HCT116 (cell line): ENCODE measurements at regions of chr11 and their contacts with region 1.

Region 1: DNA sequence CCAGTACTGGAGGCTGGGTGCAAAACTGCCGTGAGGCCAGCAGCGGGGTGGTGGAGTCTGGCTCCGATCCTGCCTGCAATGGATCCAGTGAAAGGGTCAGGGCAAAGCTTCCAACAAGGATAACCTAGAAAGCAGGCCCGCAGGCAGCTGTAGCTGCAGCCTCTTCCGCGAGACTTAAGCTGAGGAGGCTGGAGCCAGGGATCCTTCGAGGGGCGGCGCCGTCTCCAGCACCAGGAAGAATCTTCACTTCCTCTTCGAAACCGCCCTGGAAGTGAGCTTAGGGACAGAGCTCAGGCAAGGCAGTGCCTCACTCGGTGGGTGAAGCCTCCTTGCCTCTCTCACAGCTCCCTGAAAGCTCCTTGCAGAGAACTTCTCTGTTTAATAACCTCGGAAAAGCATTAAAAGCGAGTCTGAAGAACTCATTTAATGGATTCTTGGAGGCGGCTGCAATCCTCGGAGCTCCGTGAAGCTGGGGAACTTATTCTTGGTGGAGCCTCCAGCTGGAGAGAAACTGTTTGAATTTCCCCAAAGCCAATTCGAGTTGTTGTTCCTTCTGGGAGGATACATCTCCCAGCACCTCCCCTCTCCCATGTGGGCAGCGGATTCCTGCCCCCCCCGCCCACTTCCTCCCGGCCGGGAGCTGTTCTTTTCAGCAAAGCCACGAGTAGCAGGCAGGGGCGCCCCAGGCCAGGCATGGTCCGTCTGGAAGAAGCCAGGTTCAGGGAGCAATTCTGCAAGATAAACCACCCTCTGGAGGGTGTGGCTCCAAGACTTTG is 169.9 kb downstream of the CTTN start:
- DNase-seq: no peak
- ATAC-seq: peak; percentile 94
- H3K4me3 ChIP-seq: peak overlapping the region; percentile 45 to 62
- H3K27ac ChIP-seq: peak overlapping the region; percentile 55
- H3K4me1 ChIP-seq: peaks cover 13 to 23% of the 10 kb centered on the region in 2 experiments
- H3K27me3 ChIP-seq: no peaks in the 10 kb centered on the region
- CTCF ChIP-seq: peak; percentile 14 to 52 (median 48); a peak in 5 of 6 replicates
- POLR2A ChIP-seq: no peak
- RAD21 ChIP-seq: peak; percentile 44; the same call in 1 of the 2 replicates

Region 2: GRCh38 chr11:70755410-70756161 is 187.4 kb after region 1 on chr11:
- CTCF ChIA-PET with region 1: no interaction called
- POLR2A ChIA-PET with region 1: no interaction called
- RAD21 ChIA-PET with region 1: no interaction called
- intact Hi-C with region 1: loop called (anchors 10 kb)
- DNase-seq: peak; percentile 31
- ATAC-seq: peak; percentile 100
- H3K4me3 ChIP-seq: no peak overlapping the region
- H3K27ac ChIP-seq: no peak overlapping the region
- H3K4me1 ChIP-seq: peaks cover 0 to 4% of the 10 kb centered on the region in 2 experiments; a peak in 1 of 4 replicates
- H3K27me3 ChIP-seq: no peaks in the 10 kb centered on the region
- CTCF ChIP-seq: peak; percentile 86 to 97 (median 92)
- POLR2A ChIP-seq: no peak
- RAD21 ChIP-seq: peak; percentile 93